Left ventricle myocardium superior (tissue), 1 donor: ENCODE measurements at regions of chr1 and their contacts with region 1.

Region 1: GRCh38 chr1:159161001-159161718 is 10.3 kb upstream of the CADM3 start:
- DNase-seq: peak; percentile 70
- ATAC-seq: peak; percentile 99

Region 2: DNA sequence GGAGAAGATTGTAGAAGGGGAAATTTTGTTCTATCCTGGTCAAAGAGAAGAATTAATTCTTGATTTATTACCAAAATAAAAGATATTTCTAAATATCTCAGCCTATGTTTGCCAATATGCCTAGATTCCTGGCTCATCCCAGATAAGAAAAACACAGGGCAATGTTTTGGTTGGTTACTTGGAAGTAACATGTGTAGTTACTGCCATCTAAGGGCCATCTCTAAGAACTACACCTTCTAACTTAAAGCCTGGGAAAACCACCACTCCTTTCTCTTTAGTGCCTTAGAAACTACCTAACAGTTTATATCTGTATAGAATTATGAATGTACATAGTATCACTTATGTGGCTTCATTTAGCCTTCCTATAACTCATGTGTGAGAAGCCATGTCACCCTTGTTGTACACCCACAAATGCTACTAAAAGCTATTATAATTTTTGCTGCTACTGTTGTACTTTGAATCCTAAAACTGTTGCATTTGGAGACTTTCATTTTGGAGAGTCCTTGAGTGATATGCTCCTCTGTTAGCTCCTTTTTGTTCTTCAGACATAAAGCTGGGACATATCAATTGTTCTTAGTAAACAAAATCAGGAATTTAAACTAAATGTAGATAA is 89.1 kb before region 1 on chr1:
- intact Hi-C with region 1: no loop called
- DNase-seq: no peak
- ATAC-seq: peak; percentile 50

Region 3: DNA sequence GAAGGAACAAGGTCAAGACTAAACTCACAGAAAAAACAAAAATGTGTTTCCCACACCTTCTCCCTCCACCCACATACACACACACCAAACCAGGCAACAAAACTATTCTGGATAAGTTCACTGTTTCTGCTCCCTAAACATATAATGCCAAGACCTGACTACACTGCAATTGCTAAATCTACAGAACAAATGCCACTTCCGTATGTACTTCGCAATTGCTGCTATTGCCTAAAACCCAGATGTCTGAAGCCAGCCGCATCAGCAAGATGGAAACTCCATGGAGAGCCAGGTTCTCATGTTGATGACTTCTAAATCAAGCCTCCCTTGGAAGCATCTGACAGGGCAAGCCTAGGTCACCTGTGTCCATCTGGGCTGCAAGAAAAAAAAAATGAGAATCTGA is 76.3 kb before region 1 on chr1:
- intact Hi-C with region 1: no loop called
- DNase-seq: no peak
- ATAC-seq: peak; percentile 50

Region 4: GRCh38 chr1:159197561-159198557 is 36.7 kb after region 1 on chr1:
- intact Hi-C with region 1: loop called (anchors 5 kb)
- DNase-seq: peak; percentile 41
- ATAC-seq: peak; percentile 64

Region 5: GRCh38 chr1:159214149-159214760 is 53.1 kb after region 1 on chr1:
- intact Hi-C with region 1: loop called (anchors 5 kb)
- DNase-seq: no peak
- ATAC-seq: no peak